ENCODE measurements at regions of chr10 and their contacts with region 1.

Region 1: DNA sequence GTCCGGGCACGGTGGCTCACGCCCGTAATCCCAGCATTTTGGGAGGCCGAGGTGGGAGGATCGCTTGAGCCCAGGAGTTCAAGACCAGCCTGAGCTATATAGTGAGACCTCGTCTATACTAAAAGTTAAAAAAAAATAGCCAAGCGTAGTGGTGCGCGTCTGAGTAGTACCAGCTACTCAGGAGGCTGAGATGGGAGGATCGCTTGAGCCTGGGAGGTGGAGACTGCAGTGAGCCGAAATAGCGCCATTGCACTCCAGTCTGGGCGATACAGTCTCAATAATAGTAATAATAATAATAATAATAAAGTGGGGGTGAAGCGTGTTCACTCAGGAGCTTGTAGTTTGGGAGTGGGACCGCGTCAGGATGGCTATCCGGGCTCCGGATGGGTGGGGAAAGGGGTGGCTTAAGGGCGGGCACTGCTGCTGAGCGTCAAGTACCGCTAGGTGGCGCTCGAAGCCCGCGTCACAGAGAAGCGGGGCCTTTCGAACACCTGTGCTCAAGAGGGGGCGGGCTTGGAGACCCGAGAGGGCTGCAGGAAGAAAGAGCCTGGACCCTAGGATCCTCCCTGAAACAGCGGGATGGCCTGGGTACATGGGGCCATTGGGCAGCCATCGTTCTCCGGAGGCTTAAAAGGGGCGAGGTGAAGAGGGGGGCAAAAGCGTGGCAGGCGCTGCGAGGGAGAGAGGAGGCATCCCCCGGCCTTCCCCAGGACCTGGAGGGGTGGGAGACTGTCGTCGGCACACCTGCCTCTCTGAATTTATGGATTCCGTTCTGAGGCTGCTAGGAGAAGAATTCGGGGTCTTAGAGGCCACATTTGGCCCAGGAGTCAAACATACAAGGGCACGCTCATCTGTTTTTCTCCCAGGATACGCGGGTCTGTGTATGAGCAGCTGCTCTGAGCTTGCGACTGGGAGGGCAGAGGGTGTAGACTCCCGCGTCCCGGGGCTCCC is 14.5 kb downstream of the LBX1 start:
- DNase-seq: peak; percentile 66
- ATAC-seq: peak; percentile 82
- H3K4me3 ChIP-seq: peak overlapping the region; percentile 55 to 63
- H3K27ac ChIP-seq: no peak overlapping the region
- H3K4me1 ChIP-seq: peaks cover 7 to 17% of the 10 kb centered on the region in 2 experiments; a peak in 2 of 4 replicates
- H3K27me3 ChIP-seq: 0 out of 2 replicates have a peak, but pooled peaks cover 3% of the 10 kb centered on the region
- CTCF ChIP-seq: peak; percentile 96 to 98 (median 97)
- POLR2A ChIP-seq: no peak
- RAD21 ChIP-seq: peak; percentile 99

Region 2: DNA sequence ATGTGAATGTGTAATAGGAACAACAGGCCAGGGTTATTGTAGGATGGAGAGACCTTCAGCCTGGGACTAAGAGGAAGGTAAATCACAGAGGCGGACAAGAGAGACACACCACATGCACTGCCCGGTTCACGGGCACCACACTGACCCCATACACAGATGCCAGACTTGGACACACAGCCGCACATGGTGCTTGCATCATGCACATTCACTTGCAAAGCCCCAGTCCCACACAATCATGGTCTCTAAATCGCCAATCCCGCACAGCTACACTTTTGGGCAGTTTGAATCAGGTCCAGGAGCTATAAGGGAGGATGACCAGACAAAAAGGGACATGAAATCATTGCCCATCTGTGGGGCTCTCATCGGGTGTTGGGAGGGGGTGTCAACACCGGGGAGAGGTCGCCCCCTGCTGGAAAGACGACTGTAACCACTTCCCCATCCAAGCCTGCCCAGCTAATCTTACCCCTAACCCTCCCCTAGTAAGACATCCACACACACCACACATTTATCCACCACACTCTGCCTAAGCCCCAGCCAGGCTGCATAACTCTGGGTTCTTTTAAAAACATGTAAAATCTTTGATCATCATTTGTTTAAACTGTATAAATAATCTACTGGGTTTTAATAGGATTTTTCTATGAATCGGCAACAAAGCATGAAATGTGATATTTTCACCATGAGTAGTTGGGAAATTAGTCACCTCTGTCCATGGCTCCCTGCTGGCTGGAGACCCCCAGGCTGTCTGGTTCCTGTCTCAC is 342.5 kb before region 1 on chr10:
- CTCF ChIA-PET with region 1: no interaction called
- POLR2A ChIA-PET with region 1: no interaction called
- RAD21 ChIA-PET with region 1: no interaction called
- intact Hi-C with region 1: no loop called
- DNase-seq: peak; percentile 51
- ATAC-seq: peak; percentile 96
- H3K4me3 ChIP-seq: no peak overlapping the region
- H3K27ac ChIP-seq: no peak overlapping the region
- H3K4me1 ChIP-seq: peaks cover 0 to 7% of the 10 kb centered on the region in 2 experiments; a peak in 1 of 4 replicates
- H3K27me3 ChIP-seq: no peaks in the 10 kb centered on the region
- CTCF ChIP-seq: peak; percentile 88 to 95 (median 94)
- POLR2A ChIP-seq: no peak
- RAD21 ChIP-seq: peak; percentile 94

Region 3: DNA sequence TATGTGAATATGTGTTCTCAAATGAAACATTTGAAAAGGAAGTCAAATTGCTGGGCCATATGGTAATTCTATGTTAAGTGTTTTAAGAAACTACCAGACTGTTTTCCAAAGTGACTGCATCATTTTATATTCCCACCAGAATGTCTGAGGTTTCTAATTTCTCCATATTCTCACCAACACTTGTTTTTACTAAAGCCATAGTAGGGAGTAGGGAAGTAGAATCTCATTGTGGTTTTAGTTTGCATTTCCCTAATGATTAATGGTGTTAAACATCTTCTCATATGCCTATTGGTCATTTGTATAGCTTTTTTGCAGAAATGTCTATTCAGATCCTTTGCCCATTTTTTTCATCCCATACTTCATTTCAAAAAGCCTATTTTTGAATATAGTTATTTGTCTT is 254.5 kb before region 1 on chr10:
- CTCF ChIA-PET with region 1: no interaction called
- POLR2A ChIA-PET with region 1: no interaction called
- RAD21 ChIA-PET with region 1: no interaction called
- intact Hi-C with region 1: no loop called
- DNase-seq: no peak
- ATAC-seq: no peak
- H3K4me3 ChIP-seq: no peak overlapping the region
- H3K27ac ChIP-seq: no peak overlapping the region
- H3K4me1 ChIP-seq: no peaks in the 10 kb centered on the region
- H3K27me3 ChIP-seq: no peaks in the 10 kb centered on the region
- CTCF ChIP-seq: no peak
- POLR2A ChIP-seq: no peak
- RAD21 ChIP-seq: no peak

Region 4: DNA sequence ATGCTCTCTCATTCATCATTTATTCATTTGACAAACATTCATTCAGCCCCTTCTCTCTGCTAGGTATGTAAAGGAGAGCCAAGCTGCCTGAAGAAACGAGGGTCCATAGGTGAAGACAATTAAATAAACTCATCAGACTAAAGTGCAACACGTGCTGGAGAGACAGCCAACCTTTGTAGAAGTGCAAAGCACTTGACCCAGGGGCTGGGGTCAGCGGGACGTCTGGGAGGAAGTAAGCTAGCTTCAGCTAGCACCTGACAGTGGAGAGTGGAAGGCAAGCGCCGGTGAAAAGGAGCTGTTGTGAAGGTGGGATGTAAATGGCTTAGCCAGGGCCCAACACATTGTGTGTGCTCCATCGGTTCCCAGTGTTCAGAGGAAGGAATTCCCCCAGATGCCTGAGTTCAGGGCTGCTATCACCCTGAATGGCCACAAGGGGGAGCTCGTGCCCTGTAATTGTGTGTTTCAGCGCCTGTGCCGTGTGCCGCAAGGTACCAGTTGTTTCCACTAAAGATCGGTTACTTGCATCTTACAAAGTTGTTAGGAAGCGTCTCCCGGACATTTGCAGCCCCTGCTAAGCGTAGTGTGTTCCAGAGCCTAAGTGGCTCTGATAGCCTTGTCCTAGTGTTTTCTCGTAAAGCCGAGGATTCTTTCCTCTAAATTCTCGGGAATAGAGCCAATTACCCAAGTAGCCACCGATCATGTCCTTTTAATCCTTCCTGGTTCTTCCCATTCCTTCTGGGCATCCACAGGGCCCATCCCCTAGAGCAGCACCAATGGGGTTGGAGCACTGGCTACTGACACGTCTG is 53.0 kb before region 1 on chr10:
- CTCF ChIA-PET with region 1: interaction called, 19 read pairs
- POLR2A ChIA-PET with region 1: interaction called, 3 read pairs
- RAD21 ChIA-PET with region 1: interaction called, 3 read pairs
- intact Hi-C with region 1: loop called (anchors 1 kb)
- DNase-seq: peak; percentile 72
- ATAC-seq: peak; percentile 95
- H3K4me3 ChIP-seq: peak overlapping the region; percentile 38 to 47
- H3K27ac ChIP-seq: no peak overlapping the region
- H3K4me1 ChIP-seq: peaks cover 4 to 15% of the 10 kb centered on the region in 2 experiments; a peak in 3 of 4 replicates
- H3K27me3 ChIP-seq: no peaks in the 10 kb centered on the region
- CTCF ChIP-seq: peak; percentile 95 to 100 (median 99)
- POLR2A ChIP-seq: no peak
- RAD21 ChIP-seq: peak; percentile 99

Region 5: DNA sequence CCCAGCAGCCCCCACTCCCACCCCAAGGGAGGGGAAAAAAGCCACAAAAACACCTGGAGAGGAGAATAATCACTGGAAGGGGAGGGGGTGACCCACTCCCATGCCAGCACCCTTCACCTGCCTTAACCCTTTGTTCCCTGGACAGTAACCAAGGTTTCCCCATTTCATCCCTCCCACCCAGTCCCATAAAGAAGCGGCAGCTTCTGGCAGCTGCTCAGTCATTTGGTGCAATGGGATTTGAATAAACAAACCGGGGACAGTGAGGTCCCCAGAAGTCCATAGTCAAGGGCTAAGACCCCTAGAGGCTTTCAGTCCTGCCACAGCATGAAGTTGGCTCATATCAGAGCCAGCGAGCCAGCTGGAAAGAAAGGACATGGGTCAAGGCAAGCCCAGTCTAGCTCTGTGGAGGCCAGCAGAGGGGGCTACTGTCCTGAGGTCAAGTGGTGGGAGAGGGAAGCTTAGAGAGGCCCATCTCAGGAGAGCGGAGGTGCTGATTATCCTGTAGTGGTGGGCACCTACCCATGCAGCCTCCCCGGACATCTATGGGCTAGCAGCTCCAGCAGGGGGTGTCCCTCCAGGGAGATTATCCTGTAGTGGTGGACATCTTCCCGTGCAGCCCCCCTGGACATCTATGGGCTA is 73.4 kb after region 1 on chr10:
- CTCF ChIA-PET with region 1: interaction called, 10 read pairs
- POLR2A ChIA-PET with region 1: no interaction called
- RAD21 ChIA-PET with region 1: interaction called in 1 of 2 experiments, 4 read pairs
- intact Hi-C with region 1: no loop called
- DNase-seq: peak; percentile 41
- ATAC-seq: peak; percentile 86
- H3K4me3 ChIP-seq: no peak overlapping the region
- H3K27ac ChIP-seq: no peak overlapping the region
- H3K4me1 ChIP-seq: no peaks in the 10 kb centered on the region; a peak in 1 of 4 replicates
- H3K27me3 ChIP-seq: no peaks in the 10 kb centered on the region
- CTCF ChIP-seq: peak; percentile 34 to 57 (median 45); a peak in 5 of 6 replicates
- POLR2A ChIP-seq: no peak
- RAD21 ChIP-seq: peak; percentile 72

Region 6: GRCh38 chr10:101467286-101467770 is 252.6 kb after region 1 on chr10:
- CTCF ChIA-PET with region 1: interaction called, 65 read pairs
- POLR2A ChIA-PET with region 1: interaction called, 7 read pairs
- RAD21 ChIA-PET with region 1: interaction called, 4 to 6 read pairs
- intact Hi-C with region 1: loop called (anchors 1 kb)
- DNase-seq: peak; percentile 76
- ATAC-seq: peak; percentile 94
- H3K4me3 ChIP-seq: no peak overlapping the region
- H3K27ac ChIP-seq: no peak overlapping the region
- H3K4me1 ChIP-seq: no peaks in the 10 kb centered on the region
- H3K27me3 ChIP-seq: no peaks in the 10 kb centered on the region
- CTCF ChIP-seq: peak; percentile 85 to 99 (median 98)
- POLR2A ChIP-seq: no peak
- RAD21 ChIP-seq: peak; percentile 78

Region 7: GRCh38 chr10:101602761-101603398 is 388.2 kb after region 1 on chr10:
- CTCF ChIA-PET with region 1: interaction called, 31 read pairs
- POLR2A ChIA-PET with region 1: no interaction called
- RAD21 ChIA-PET with region 1: no interaction called
- intact Hi-C with region 1: no loop called
- DNase-seq: peak; percentile 71
- ATAC-seq: peak; percentile 99
- H3K4me3 ChIP-seq: no peak overlapping the region
- H3K27ac ChIP-seq: no peak overlapping the region
- H3K4me1 ChIP-seq: no peaks in the 10 kb centered on the region
- H3K27me3 ChIP-seq: no peaks in the 10 kb centered on the region
- CTCF ChIP-seq: peak; percentile 97 to 99 (median 99)
- POLR2A ChIP-seq: no peak
- RAD21 ChIP-seq: peak; percentile 96

Region 8: GRCh38 chr10:102072673-102073527 is 858.2 kb after region 1 on chr10:
- CTCF ChIA-PET with region 1: interaction called, 6 read pairs
- POLR2A ChIA-PET with region 1: no interaction called
- RAD21 ChIA-PET with region 1: interaction called in 1 of 2 experiments, 3 read pairs
- intact Hi-C with region 1: loop called (anchors 2 kb)
- DNase-seq: peak; percentile 87
- ATAC-seq: peak; percentile 96
- H3K4me3 ChIP-seq: no peak overlapping the region
- H3K27ac ChIP-seq: no peak overlapping the region
- H3K4me1 ChIP-seq: peaks cover 5 to 6% of the 10 kb centered on the region in 2 experiments; a peak in 2 of 4 replicates
- H3K27me3 ChIP-seq: peaks cover under 1% of the 10 kb centered on the region; the same call in 1 of the 2 replicates
- CTCF ChIP-seq: peak in 2 of 3 experiments; percentile 100; a peak in 4 of 6 replicates
- POLR2A ChIP-seq: no peak
- RAD21 ChIP-seq: no peak

Measured in HCT116 (cell line).